BJ (cell line): ENCODE measurements at regions of chr14 and their contacts with region 1.

Region 1: DNA sequence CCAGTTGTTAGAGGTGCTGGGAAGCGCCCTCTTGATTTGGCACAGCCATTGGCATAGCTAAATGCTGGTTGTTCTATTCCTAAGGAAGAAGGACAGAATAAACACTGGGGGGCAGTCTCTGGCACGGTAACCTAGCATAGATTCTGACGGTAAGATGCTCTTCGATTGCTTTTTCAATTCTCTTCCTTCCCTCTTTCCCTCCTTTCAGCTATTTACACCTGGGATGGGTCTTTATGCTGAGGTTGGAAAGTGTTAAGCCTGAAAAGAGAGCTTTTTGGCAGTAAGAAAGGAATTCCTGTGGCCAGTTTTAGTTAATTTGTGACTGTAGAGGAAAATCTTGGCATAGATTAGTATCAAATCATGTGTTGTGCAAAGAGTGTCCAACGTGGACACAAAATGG is 162.8 kb downstream of the SNAPC1 start:
- DNase-seq: no peak
- H3K4me3 ChIP-seq: no peak overlapping the region
- H3K27me3 ChIP-seq: no peaks in the 10 kb centered on the region
- CTCF ChIP-seq: peak; percentile 48

Region 2: DNA sequence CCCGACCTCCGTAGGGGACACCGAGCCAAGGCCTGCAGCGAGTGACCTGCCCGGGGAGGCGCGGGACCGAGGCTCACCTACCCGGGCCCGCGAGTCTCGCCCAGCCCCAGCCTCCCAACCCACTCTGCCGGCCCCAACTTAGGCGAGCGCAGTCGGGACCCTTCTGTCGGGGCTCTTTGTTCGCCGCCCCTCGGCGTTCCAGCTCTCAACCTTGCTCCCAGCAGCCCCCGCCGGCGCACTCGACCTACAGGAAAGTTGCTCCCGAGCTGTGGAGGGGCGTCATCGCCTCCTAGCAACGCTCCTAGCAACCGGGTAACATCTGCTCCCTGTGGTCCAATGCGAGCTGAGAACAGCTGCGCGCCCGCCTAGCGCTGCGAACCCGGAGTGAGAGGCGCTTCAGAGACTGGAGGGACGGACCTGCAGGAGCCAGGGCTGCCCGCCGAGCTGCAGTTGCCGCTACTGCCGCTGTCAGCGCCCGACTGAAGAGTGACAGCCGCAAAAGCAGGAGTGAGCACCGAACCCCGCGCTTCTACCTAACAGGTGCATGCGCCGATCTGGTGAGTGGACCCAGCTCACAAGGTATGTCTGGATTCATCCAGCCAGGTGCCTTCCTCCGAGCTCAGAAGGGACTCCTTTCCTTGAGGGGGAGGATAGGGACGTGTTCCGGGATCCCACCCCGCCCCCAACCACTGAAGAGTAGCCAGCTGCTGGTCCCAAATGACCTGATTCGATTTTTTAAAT is 192.1 kb after region 1 on chr14:
- CTCF ChIA-PET with region 1: interaction called, 21 read pairs
- POLR2A ChIA-PET with region 1: no interaction called
- DNase-seq: no peak
- H3K4me3 ChIP-seq: peak overlapping the region; percentile 37
- H3K27me3 ChIP-seq: peaks cover 8% of the 10 kb centered on the region
- CTCF ChIP-seq: peak; percentile 57